ENCODE measurements at regions of chrX and their contacts with region 1.

Region 1: DNA sequence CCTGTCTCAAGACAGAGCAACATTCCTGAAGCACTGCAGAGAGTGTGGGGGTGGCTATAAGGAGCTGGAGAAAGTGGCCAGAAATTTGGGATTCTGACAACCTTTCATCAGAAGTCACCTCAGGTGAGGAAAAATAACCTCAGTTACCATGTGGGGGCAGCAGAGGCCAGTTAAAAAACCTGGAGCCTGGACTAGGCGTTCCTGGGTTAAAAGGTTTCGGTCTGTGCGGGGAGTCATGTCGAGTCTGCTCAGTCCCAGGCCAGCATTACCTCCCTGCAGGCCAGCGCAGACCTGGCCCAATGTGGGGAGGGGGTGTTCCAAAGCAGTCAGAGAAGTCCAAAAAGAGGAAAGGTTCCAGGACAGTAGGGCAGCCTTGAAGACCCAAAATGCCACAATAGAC is 10.9 kb upstream of the NALF2 start:
- DNase-seq: no peak
- ATAC-seq: peak; percentile 60; the same call in 1 of the 2 replicates
- H3K4me3 ChIP-seq: no peak overlapping the region
- H3K27ac ChIP-seq: no peak overlapping the region
- H3K4me1 ChIP-seq: no peaks in the 10 kb centered on the region
- H3K27me3 ChIP-seq: 0 out of 2 replicates have a peak, but pooled peaks cover 2% of the 10 kb centered on the region
- CTCF ChIP-seq: peak; percentile 63

Region 2: DNA sequence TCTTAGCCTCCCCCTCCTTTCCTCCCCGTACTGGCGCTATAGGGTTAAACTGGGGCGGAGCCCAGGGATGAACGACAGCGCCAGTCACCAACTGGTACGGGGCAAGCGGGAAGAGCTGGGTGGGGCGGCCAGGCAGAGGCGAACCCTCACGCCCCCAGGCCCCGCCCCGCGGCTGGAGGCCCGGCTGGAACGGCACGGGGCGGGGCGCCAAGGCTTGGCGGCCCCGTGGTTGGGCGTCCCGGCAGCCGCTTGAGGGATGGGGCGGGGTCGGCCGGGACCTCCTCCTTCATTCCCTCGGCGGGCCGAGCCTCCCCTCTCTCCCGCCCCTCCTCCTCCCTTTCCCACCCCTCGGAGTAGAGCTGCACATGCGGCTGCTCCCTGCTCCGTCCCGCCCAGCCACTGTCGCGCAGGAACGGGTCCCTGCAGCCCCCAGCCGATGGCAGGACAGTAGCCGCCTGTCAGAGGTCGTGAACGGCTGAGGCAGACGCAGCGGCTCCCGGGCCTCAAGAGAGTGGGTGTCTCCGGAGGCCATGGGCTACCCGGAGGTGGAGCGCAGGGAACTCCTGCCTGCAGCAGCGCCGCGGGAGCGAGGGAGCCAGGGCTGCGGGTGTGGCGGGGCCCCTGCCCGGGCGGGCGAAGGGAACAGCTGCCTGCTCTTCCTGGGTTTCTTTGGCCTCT is 122.7 kb after region 1 on chrX and contains the start of gene EDA:
- CTCF ChIA-PET with region 1: no interaction called
- POLR2A ChIA-PET with region 1: no interaction called
- in situ Hi-C with region 1: no loop called
- intact Hi-C with region 1: loop called (anchors 2 kb)
- DNase-seq: no peak
- ATAC-seq: peak; percentile 97
- H3K4me3 ChIP-seq: peak within 1 kb of the TSS; percentile 37 to 46
- H3K27ac ChIP-seq: no peak within 1 kb of the TSS
- H3K4me1 ChIP-seq: no peaks in the 10 kb centered on the region; the same call in 1 of the 2 replicates
- H3K27me3 ChIP-seq: peaks cover 3% of the 10 kb centered on the region; the same call in 1 of the 2 replicates
- CTCF ChIP-seq: no peak
- total RNA-seq, gene EDA: 0.23 TPM

Region 3: DNA sequence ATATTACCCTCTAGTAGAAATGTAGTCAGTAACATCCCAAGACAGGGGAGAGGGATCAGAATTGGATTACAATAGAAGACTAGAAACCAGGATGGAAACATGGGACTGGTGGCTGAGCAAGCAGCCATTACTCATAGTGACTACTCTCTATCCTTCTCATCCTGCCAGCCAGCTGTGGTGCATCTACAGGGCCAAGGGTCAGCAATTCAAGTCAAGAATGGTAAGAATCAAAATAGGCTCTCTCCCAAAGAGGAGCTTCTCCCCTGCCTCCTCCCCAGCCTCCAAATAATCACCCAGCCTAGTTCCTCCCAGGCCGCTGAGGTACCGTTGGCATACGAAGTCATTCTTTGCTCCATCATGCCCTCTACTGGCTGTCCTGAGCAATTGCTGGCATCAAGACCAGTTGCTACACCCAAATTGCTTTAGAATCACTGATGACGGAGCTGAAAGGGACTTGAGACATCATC is 537.1 kb after region 1 on chrX:
- CTCF ChIA-PET with region 1: no interaction called
- POLR2A ChIA-PET with region 1: no interaction called
- in situ Hi-C with region 1: no loop called
- intact Hi-C with region 1: loop called (anchors 10 kb)
- DNase-seq: peak; percentile 25
- ATAC-seq: peak; percentile 73
- H3K4me3 ChIP-seq: no peak overlapping the region
- H3K27ac ChIP-seq: no peak overlapping the region
- H3K4me1 ChIP-seq: no peaks in the 10 kb centered on the region
- H3K27me3 ChIP-seq: no peaks in the 10 kb centered on the region
- CTCF ChIP-seq: peak; percentile 83

Region 4: GRCh38 chrX:70096052-70096451 is 602.9 kb after region 1 on chrX:
- CTCF ChIA-PET with region 1: no interaction called
- POLR2A ChIA-PET with region 1: no interaction called
- in situ Hi-C with region 1: no loop called
- intact Hi-C with region 1: loop called (anchors 5 kb)
- DNase-seq: no peak
- ATAC-seq: no peak
- H3K4me3 ChIP-seq: no peak overlapping the region
- H3K27ac ChIP-seq: no peak overlapping the region
- H3K4me1 ChIP-seq: no peaks in the 10 kb centered on the region
- H3K27me3 ChIP-seq: 0 out of 2 replicates have a peak, but pooled peaks cover 2% of the 10 kb centered on the region
- CTCF ChIP-seq: peak; percentile 36

Measured in Panc1 (cell line).